AG04449 (cell line): ENCODE measurements at regions of chr2 and their contacts with region 1.

Region 1: DNA sequence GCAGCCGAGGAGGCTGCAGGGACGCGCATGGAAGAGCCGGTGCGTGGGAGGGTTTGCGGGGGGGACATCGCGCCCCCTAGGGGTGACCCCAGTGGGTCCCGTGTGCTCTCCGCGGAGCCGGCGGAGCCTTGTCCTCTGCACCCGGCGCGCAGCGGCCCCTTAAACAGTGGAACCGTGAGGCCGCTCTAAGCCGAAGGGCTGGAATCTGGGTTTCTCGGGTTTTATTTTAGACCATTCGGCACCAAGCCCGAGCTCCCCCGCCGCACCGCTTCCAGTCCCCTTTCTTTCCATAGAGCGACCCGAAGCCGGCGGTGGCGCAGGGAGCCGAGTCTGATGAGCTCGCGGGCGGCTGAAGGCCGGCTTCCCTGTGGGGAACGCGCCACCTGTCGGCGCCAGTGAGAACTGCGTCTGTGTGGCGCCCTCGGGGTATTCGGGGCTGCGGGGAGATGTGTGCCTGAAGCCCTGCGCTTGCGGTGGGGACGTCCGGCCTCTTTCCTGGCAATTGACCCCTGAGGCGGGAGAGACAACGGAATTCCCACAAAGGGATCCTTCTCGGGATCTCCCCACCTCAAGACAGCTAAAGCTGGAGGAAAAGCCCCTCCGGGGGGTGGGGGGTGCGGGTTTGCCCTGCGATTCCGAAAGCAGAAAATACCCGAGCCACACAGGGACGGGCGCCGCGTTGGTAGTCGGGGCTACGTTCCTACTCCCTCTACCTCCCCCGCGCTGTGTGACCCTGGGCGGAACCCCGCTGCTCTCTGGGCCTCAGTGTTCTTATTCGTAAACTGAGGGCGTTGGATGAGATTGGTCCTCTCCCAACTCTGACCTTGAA is 8.2 kb upstream of the EN1 start:
- DNase-seq: no peak
- H3K4me3 ChIP-seq: peak overlapping the region; percentile 60
- CTCF ChIP-seq: peak; percentile 98

Region 2: GRCh38 chr2:118221666-118222594 is 633.7 kb before region 1 on chr2:
- CTCF ChIA-PET with region 1: interaction called, 116 read pairs
- POLR2A ChIA-PET with region 1: no interaction called
- DNase-seq: peak; percentile 53
- H3K4me3 ChIP-seq: no peak overlapping the region
- CTCF ChIP-seq: peak; percentile 69

Region 3: DNA sequence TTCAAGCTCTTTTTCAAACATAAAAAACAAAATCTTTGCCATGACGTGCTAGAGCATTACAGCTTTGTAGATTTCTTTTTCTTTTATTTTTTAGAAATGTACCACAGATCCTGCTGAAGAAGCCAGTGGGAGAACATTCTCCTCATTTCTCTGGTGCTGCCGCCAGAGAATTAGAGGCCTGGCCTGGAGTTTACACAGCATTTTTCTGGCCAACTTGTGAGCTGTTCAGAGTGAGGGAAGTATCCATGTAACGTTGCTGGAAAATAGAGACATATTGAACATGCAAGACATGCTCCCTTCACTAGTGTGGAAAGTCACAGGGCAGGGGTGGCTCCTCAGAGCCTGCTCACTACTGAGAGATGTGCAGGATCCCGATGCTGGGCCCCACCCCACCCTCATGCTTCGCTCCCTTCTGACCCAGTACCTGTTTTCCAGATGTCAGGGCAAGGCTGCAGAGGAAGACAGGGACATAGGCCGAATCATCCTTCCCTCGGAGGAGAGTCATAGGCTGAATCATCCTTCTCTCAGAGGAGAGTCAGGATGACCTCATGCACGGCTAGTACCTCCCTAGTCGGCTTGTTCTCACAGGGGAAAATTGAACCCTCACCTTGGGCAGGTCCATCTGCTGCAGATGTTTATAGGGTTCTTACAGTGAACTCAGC is 468.9 kb before region 1 on chr2:
- CTCF ChIA-PET with region 1: interaction called, 25 read pairs
- POLR2A ChIA-PET with region 1: no interaction called
- DNase-seq: peak; percentile 42
- H3K4me3 ChIP-seq: no peak overlapping the region
- CTCF ChIP-seq: no peak

Region 4: DNA sequence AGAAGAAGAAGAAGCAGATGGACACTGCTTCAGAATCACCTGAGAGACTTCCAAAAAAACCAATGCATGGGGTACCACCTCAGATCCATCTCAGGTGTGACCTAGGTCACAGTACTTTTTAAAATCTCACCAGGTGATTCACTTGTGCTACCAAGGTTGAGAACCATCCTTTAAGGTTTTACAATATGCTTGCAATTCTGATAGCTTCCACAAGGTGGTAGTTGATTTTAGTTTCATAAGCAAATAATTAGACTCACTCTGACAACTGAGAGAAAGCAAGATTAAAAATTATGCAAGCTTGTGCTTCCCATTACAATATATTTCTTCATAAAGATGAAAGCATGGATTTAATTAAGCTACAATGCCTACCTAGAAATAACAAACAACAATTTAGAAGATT is 363.3 kb before region 1 on chr2:
- CTCF ChIA-PET with region 1: interaction called, 15 read pairs
- POLR2A ChIA-PET with region 1: no interaction called
- DNase-seq: no peak
- H3K4me3 ChIP-seq: no peak overlapping the region
- CTCF ChIP-seq: no peak

Region 5: GRCh38 chr2:118668431-118669424 is 186.9 kb before region 1 on chr2:
- CTCF ChIA-PET with region 1: interaction called, 29 read pairs
- POLR2A ChIA-PET with region 1: no interaction called
- DNase-seq: peak; percentile 97
- H3K4me3 ChIP-seq: no peak overlapping the region
- CTCF ChIP-seq: no peak

Region 6: GRCh38 chr2:118774458-118775133 is 81.1 kb before region 1 on chr2:
- CTCF ChIA-PET with region 1: interaction called, 18 read pairs
- POLR2A ChIA-PET with region 1: no interaction called
- DNase-seq: no peak
- H3K4me3 ChIP-seq: peak overlapping the region; percentile 64
- CTCF ChIP-seq: no peak

Region 7: GRCh38 chr2:118889995-118890394 is 34.3 kb after region 1 on chr2:
- CTCF ChIA-PET with region 1: no interaction called
- POLR2A ChIA-PET with region 1: no interaction called
- DNase-seq: no peak
- H3K4me3 ChIP-seq: no peak overlapping the region
- CTCF ChIP-seq: no peak

Region 8: DNA sequence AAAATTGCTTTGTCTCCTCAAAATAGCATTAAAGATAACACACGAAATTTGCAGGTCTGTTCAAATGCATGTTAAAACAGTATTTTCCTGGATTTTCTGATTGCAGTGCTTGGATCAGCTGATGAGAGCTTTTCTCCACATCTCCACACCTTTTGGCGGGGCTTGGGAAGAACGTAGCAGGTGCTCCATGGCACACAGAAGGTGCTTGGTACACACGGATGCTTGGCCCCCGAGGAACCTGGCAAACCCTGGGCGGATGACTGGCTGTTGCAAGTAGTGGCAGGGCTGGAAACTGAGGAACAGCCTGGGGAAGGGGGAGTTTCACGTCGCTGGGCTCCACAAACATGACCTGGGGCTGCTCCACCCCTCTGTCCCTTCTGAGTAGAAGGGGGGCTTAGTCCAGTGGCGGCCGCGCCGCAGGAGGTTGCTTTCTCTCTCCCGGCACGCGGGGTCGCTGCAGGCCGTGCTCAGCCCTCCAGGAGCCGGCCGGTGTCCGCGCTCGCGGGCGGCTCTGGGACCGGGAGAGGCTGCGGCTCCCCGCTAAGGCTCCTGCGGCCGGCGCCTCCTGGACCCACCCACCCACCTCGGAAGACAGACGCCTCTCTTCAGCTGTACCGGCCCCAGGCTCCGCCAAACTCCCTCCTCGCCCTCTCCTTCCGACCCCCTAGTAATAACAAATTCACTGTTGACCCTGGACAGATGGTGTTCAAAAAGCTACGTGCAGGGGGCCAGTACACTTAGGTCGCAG is 155.7 kb after region 1 on chr2:
- CTCF ChIA-PET with region 1: no interaction called
- POLR2A ChIA-PET with region 1: no interaction called
- DNase-seq: no peak
- H3K4me3 ChIP-seq: no peak overlapping the region; the same call in 1 of the 2 replicates
- CTCF ChIP-seq: peak; percentile 67